ENCODE measurements at regions of chr7 and their contacts with region 1.

Region 1: DNA sequence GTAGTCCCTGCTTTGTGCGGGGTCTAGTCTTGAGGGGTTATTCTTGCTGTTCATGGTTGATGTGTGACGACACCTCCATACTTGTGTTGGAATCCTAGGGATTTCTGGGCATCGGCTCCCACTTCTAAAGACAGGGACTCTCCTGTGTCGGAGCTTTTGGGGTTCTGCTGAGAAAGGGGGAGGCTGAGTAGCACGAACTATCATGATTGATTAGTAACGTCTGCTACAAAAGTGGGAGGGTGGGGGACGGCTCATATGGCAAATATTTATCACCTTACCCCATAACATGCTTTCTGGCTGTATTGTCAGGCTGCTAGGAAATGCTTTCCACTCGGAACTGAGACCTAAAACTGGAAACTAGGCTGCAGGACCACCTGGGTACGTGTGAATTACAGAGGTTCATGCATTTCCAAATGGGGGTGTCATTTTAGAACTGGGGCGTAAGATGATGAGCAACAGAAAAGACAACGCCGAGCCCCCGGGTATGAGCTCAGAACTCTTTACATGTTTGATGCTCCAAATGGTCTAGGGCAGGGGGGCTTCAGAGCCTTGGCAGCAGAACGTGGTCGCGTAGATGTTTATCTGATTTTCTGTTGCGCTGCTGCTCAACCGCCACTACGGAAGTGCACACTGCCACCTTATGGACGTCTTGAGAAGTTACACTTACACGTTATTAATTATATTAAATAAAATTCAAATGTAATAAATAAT is 15.1 kb upstream of the NME8 start:
- DNase-seq: peak; percentile 25
- H3K4me3 ChIP-seq: no peak overlapping the region
- H3K27ac ChIP-seq: no peak overlapping the region
- H3K4me1 ChIP-seq: no peaks in the 10 kb centered on the region
- H3K27me3 ChIP-seq: no peaks in the 10 kb centered on the region
- CTCF ChIP-seq: peak; percentile 60

Region 2: DNA sequence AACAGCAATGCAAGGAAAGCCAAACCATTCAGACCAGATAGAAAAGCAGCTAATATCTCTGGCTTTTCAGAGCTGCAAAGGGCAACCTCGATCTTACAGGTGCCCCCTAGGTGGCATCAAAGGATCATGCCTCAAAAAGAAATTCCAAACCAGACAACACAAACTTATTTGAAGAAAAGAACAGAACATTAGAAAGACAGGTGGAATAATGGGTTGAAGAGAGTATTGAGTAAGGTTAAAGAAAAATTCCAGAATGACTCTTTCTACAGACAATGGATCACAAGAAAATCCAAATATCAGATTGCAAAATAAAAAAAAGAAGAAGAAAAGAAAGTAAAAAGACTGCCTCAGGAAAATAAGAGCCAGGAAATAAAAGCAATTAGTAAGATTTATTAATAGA is 598.3 kb before region 1 on chr7:
- intact Hi-C with region 1: loop called (anchors 10 kb)
- DNase-seq: no peak
- H3K4me3 ChIP-seq: no peak overlapping the region
- H3K27ac ChIP-seq: no peak overlapping the region
- H3K4me1 ChIP-seq: no peaks in the 10 kb centered on the region
- H3K27me3 ChIP-seq: no peaks in the 10 kb centered on the region
- CTCF ChIP-seq: peak; percentile 31

Region 3: DNA sequence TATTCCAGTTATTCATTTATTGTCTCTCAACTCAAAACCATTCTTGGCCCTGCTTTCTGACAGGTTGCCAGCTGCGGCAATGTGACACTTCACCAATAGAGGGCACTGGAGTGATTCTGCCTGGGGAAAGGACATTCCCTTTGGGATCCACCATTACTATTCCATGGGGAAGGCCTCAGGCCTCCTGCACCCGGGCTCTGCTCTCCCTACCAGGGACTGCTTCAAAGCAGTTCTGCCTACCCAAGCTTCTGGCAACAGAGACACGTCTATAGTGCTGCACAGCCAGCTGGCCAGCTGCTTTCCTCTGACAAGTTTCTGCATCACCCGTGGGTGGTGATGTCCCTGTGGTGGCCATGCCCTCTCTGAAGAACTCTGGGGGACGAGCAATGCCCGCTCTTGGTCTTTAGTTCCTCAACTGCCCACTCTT is 548.4 kb before region 1 on chr7:
- intact Hi-C with region 1: loop called (anchors 5 kb)
- DNase-seq: peak; percentile 64
- H3K4me3 ChIP-seq: no peak overlapping the region
- H3K27ac ChIP-seq: no peak overlapping the region
- H3K4me1 ChIP-seq: peaks cover 2% of the 10 kb centered on the region
- H3K27me3 ChIP-seq: no peaks in the 10 kb centered on the region
- CTCF ChIP-seq: peak; percentile 76

Region 4: GRCh38 chr7:37376386-37376785 is 456.9 kb before region 1 on chr7:
- intact Hi-C with region 1: no loop called
- DNase-seq: no peak
- H3K4me3 ChIP-seq: no peak overlapping the region
- H3K27ac ChIP-seq: no peak overlapping the region
- H3K4me1 ChIP-seq: no peaks in the 10 kb centered on the region
- H3K27me3 ChIP-seq: no peaks in the 10 kb centered on the region
- CTCF ChIP-seq: no peak

Region 5: DNA sequence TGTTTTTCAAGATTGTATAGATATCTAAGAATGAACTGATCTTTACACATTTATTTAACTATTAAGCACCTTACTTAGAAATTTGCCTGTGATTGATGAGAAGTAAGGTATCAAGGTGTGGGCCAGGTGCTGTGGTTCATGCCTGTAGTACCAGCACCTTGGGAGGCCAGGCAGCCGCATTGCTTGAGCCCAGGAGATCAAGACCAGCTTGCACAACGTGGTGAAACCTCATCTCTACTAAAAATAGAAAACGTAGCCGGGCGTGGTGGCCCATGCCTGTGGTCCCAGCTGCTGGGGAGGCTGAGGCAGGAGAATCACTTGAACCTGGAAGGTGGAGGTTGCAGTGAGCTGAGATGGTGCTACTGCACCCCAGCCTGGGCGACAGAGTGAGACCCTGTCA is 48.8 kb after region 1 on chr7:
- intact Hi-C with region 1: no loop called
- DNase-seq: no peak
- H3K4me3 ChIP-seq: no peak overlapping the region
- H3K27ac ChIP-seq: no peak overlapping the region
- H3K4me1 ChIP-seq: no peaks in the 10 kb centered on the region
- H3K27me3 ChIP-seq: no peaks in the 10 kb centered on the region
- CTCF ChIP-seq: no peak

Region 6: GRCh38 chr7:38142736-38143135 is 309.5 kb after region 1 on chr7:
- intact Hi-C with region 1: no loop called
- DNase-seq: no peak
- H3K4me3 ChIP-seq: no peak overlapping the region
- H3K27ac ChIP-seq: no peak overlapping the region
- H3K4me1 ChIP-seq: no peaks in the 10 kb centered on the region
- H3K27me3 ChIP-seq: no peaks in the 10 kb centered on the region
- CTCF ChIP-seq: no peak

Measured in colonic mucosa (tissue), 4 donors.